Breast epithelium (tissue), 4 donors: ENCODE measurements at regions of chr10 and their contacts with region 1.

Region 1: DNA sequence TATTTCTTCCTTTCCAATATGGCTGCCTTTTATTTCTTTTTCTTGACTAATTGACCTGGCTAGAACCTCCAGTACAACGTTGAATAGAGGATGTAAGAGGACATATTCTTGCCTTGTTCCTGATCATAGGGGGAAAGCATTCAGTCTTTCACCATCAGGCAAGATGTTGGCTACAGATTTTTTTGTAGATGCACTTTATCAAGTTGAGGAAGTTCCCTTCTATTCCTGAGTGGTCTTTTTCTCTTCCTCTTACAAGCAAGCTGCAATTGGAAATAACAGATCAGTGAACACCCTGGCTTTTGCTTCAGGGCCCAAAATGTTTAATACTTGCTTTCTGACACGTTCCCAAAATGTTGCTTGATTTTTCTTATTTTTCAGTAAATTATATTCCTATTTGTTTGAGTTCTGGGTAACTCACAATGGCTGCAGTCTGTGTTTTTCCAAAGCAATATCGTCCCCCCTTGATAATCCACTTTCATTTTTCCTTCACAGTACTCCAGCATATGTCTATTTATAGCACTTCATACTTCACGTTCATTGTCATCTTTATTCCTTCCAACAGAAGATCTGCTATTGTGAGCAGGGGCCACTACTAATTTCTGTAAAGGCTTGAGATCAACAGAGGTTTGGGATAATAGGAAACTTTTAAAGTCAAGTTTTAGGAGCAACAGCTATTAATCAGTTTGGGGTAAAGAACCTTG is 11.7 kb downstream of the CPEB3 start:
- DNase-seq: no peak
- H3K4me3 ChIP-seq: no peak overlapping the region
- H3K27ac ChIP-seq: no peak overlapping the region
- H3K4me1 ChIP-seq: no peaks in the 10 kb centered on the region
- H3K27me3 ChIP-seq: no peaks in the 10 kb centered on the region
- CTCF ChIP-seq: no peak
- POLR2A ChIP-seq: no peak

Region 2: DNA sequence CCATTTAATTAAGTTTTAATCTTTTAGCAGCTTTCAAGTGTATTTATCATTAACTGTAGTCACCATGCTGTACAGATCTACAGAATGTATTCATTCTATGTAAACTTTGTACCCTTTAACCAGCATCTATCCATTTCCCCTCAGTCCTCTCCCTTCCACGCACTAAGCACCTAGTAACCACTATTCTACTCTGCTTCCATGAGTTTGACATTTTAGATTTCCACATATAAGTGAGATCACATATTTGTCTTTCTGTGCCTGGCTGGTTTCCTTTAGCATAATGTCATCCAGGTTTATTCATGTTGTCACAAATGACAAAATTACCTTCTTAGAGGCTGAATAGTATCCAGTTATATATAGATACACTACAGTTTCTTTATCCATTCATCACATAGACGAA is 275.9 kb before region 1 on chr10:
- intact Hi-C with region 1: loop called (anchors 10 kb)
- DNase-seq: no peak
- H3K4me3 ChIP-seq: no peak overlapping the region
- H3K27ac ChIP-seq: no peak overlapping the region
- H3K4me1 ChIP-seq: no peaks in the 10 kb centered on the region
- H3K27me3 ChIP-seq: no peaks in the 10 kb centered on the region
- CTCF ChIP-seq: no peak
- POLR2A ChIP-seq: no peak

Region 3: GRCh38 chr10:92810934-92811532 is 531.9 kb after region 1 on chr10:
- intact Hi-C with region 1: no loop called
- DNase-seq: no peak
- H3K4me3 ChIP-seq: no peak overlapping the region
- H3K27ac ChIP-seq: no peak overlapping the region
- H3K4me1 ChIP-seq: no peaks in the 10 kb centered on the region
- H3K27me3 ChIP-seq: no peaks in the 10 kb centered on the region
- CTCF ChIP-seq: no peak
- POLR2A ChIP-seq: no peak